Dendritic cell treated with granulocyte-macrophage colony-stimulating factor and Interleukin-4, amounts not matched to agents 40 ng/mL and 50 ng/mL, for 4 days (primary cell): ENCODE measurements at regions of chr2 and their contacts with region 1.

Region 1: DNA sequence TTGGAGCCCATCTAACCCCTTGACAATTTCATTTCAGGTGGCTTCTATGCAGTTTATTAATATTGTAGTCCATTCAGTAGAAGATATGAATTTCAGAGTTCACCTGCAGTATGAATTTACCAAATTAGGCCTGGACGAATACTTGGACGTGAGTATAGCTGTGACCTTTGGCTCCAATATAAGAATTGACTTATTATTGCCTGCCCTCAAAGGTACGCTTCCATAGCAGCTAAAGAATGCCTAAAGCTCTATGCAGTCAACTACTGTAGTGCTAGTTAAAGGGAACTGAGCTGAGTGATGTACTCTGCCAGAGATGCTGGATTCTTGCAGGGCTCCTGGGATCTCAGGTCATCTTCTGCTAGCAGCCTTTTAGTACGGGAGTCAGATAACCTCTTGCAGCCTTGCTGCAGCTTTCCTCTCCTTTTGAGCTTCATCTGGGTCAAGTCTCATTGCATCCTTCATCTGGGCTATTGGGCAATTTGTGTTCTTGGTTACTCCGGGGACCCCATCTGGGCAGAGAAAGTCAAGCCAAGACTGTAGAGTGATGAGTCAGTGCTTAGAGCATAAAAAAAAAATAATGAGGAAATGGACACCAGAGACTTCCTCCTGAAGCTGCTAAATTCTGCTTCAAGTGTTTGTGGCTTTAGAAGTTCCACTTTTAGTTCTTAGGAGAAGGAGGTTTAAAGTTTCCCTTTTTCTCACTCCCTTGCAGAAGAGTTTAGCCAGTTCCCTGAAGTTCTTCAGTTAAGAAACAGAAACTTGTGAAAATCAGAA is 105.6 kb downstream of the PRPF40A start:
- H3K4me3 Mint-ChIP-seq: peak overlapping the region; percentile 74
- H3K27ac Mint-ChIP-seq: peak overlapping the region; percentile 91
- H3K4me1 Mint-ChIP-seq: peaks cover 50% of the 10 kb centered on the region
- H3K27me3 Mint-ChIP-seq: no peaks in the 10 kb centered on the region

Region 2: DNA sequence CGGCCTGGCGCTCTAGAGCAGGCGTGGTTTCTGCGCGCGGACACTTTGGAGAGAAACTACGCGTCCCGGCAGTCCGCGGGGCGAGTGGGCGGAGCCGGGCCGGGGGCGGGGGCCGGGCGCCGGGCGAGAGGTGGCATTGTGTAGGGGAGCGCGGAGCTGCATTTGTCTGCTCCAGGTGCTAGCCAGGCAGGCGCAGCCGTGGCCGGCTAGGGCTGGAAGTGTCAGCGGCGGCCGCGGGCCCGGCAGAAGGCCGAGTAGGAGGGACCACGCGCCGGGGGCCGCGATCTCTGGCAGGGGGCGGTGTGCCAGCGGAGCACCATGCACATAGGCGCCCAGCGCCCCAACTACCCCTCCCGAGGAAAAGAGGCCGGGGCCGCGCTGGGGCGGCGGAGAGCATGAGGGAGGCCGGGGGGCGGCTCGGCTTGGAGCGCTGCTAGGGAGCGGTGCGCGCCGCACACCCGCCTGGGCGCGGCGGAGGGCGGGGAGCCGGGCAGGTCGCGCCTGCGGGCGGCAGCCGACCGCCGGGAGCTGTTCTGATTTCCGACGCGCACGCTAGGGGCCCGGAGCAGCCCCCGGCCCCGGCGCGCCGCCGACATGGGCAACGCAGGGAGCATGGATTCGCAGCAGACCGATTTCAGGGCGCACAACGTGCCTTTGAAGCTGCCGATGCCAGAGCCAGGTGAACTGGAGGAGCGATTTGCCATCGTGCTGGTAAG is 276.5 kb before region 1 on chr2 and contains the start of gene FMNL2:
- intact Hi-C with region 1: loop called (anchors 10 kb)
- H3K4me3 Mint-ChIP-seq: peak within 1 kb of the TSS; percentile 86
- H3K27ac Mint-ChIP-seq: peak within 1 kb of the TSS; percentile 82
- H3K4me1 Mint-ChIP-seq: peaks cover 29% of the 10 kb centered on the region
- H3K27me3 Mint-ChIP-seq: peaks cover 43% of the 10 kb centered on the region

Region 3: GRCh38 chr2:152421521-152422370 is 189.9 kb before region 1 on chr2:
- intact Hi-C with region 1: loop called (anchors 5 kb)
- H3K4me3 Mint-ChIP-seq: peak overlapping the region; percentile 26
- H3K27ac Mint-ChIP-seq: peak overlapping the region; percentile 88
- H3K4me1 Mint-ChIP-seq: peaks cover 55% of the 10 kb centered on the region
- H3K27me3 Mint-ChIP-seq: no peaks in the 10 kb centered on the region

Region 4: DNA sequence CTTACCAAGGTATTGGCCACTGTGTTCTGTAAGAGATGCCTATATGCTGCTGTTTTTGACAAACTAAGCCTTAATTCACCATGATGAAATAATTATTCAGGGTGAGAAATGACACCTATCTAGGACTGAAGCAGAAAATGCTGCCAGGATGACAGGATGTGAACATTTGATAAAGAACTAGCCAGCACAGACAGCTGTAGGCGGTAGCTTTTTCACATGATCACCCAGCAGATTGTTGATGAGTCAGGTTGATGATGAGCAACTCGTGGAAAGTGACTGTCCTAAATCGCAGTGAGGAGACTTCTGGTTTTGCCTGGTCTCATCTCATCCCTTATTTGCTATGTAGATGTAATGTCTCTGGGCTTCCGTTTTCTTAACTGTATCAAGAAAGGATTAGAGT is 38.5 kb before region 1 on chr2:
- intact Hi-C with region 1: loop called (anchors 2 kb)
- H3K4me3 Mint-ChIP-seq: no peak overlapping the region
- H3K27ac Mint-ChIP-seq: no peak overlapping the region
- H3K4me1 Mint-ChIP-seq: peaks cover 16% of the 10 kb centered on the region
- H3K27me3 Mint-ChIP-seq: no peaks in the 10 kb centered on the region

Region 5: GRCh38 chr2:152594022-152594766 is 17.5 kb before region 1 on chr2:
- intact Hi-C with region 1: loop called (anchors 1 kb)
- H3K4me3 Mint-ChIP-seq: no peak overlapping the region
- H3K27ac Mint-ChIP-seq: peak overlapping the region; percentile 85
- H3K4me1 Mint-ChIP-seq: peaks cover 36% of the 10 kb centered on the region
- H3K27me3 Mint-ChIP-seq: peaks cover 1% of the 10 kb centered on the region

Region 6: GRCh38 chr2:153739394-153739793 is 1127.7 kb after region 1 on chr2:
- intact Hi-C with region 1: no loop called
- H3K4me3 Mint-ChIP-seq: no peak overlapping the region
- H3K27ac Mint-ChIP-seq: no peak overlapping the region
- H3K4me1 Mint-ChIP-seq: no peaks in the 10 kb centered on the region
- H3K27me3 Mint-ChIP-seq: no peaks in the 10 kb centered on the region